ENCODE measurements at regions of chr13 and their contacts with region 1.

Region 1: DNA sequence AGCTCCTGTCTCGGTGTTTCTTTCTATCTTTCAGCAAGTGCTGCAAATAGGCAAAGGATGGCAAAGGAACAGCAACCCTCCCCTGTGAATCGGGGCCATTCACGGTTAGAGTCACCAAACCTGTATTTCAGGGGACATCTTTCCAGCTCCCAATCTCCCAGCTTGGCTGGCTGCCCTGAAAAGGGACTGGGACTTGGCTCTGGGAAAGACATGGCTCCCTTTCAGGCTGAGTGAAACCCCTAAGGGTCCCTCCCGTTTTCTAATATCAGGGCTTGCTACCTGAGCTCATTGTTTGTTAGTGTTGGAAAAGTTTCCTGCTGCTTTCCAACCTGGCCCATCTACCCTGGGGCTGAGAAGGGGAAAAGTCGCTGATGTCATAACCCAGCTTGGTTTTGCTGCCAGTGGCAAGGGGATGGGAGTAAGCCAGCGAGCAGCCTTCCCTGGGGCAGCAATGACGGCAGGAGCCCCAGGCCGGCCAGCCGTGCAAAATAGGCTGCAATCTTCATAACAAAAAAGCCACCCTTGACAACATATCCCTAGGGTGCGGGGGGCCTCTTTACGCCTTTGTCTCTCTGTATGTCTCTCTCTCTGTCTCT is 29.9 kb downstream of the SERP2 start:
- DNase-seq: no peak
- ATAC-seq: peak in 1 of 2 donors; percentile 84

Region 2: GRCh38 chr13:44322928-44323327 is 80.6 kb before region 1 on chr13:
- intact Hi-C with region 1: loop called in 1 of 2 experiments (anchors 10 kb)
- DNase-seq: no peak
- ATAC-seq: no peak

Measured in left cardiac atrium (tissue), 4 donors.